ENCODE measurements at regions of chr7 and their contacts with region 1.

Region 1: GRCh38 chr7:18495412-18496340 is at the start of gene HDAC9:
- DNase-seq: no peak
- H3K4me3 Mint-ChIP-seq: peak within 1 kb of the TSS; percentile 75
- H3K27ac Mint-ChIP-seq: peak within 1 kb of the TSS; percentile 90
- H3K4me1 Mint-ChIP-seq: peaks cover 50% of the 10 kb centered on the region
- H3K27me3 Mint-ChIP-seq: no peaks in the 10 kb centered on the region
- CTCF ChIP-seq: no peak
- total RNA-seq, gene HDAC9: 152 and 159 TPM in 2 replicates

Region 2: DNA sequence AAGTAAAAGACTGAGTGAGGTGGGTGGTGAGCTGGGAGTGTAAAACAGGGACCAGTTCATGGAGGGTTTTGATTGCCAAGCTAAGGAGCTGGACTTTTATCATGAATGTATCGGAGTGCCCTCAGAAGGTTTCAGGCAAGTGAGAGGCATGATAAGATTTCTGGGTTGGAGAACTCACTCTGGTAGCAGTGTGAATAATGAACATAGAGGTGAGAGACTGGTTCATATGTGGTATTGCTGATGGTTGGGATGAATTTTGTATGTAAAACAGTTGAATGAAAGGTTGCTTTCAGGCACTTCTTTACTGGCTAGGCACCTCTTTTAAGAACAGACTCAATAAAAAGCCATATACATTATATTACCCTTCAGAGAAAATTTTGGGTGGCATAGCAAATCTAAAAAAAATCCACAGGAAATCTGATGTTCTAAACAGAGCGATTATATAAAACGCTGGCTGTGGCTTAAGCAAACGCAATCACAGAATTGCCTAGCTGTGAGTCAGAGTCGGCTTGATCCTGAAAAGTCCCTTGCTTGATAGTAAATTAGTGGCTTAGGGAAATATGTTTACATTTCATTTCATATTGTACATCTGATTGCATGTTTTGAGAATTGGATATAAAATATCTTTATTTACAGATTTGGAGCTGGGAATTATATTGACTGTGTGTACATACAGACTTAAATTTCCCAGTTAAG is 93.0 kb before region 1 on chr7:
- CTCF ChIA-PET with region 1: interaction called, 4 read pairs
- intact Hi-C with region 1: loop called (anchors 5 kb)
- DNase-seq: peak; percentile 24
- H3K4me3 Mint-ChIP-seq: no peak overlapping the region
- H3K27ac Mint-ChIP-seq: no peak overlapping the region
- H3K4me1 Mint-ChIP-seq: peaks cover 42% of the 10 kb centered on the region
- H3K27me3 Mint-ChIP-seq: no peaks in the 10 kb centered on the region
- CTCF ChIP-seq: no peak

Region 3: GRCh38 chr7:18458830-18459229 is 36.8 kb before region 1 on chr7:
- CTCF ChIA-PET with region 1: no interaction called
- intact Hi-C with region 1: loop called (anchors 2 kb)
- DNase-seq: peak; percentile 71
- H3K4me3 Mint-ChIP-seq: peak overlapping the region; percentile 51
- H3K27ac Mint-ChIP-seq: peak overlapping the region; percentile 80
- H3K4me1 Mint-ChIP-seq: peaks cover 31% of the 10 kb centered on the region
- H3K27me3 Mint-ChIP-seq: no peaks in the 10 kb centered on the region
- CTCF ChIP-seq: no peak

Region 4: GRCh38 chr7:18508443-18509427 is 13.1 kb after region 1 on chr7:
- CTCF ChIA-PET with region 1: interaction called, 27 read pairs
- intact Hi-C with region 1: no loop called
- DNase-seq: peak; percentile 83
- H3K4me3 Mint-ChIP-seq: peak overlapping the region; percentile 74
- H3K27ac Mint-ChIP-seq: peak overlapping the region; percentile 98
- H3K4me1 Mint-ChIP-seq: peaks cover 57% of the 10 kb centered on the region
- H3K27me3 Mint-ChIP-seq: no peaks in the 10 kb centered on the region
- CTCF ChIP-seq: no peak

Region 5: GRCh38 chr7:18535810-18536415 is 40.2 kb after region 1 on chr7:
- CTCF ChIA-PET with region 1: interaction called, 11 read pairs
- intact Hi-C with region 1: no loop called
- DNase-seq: peak; percentile 25
- H3K4me3 Mint-ChIP-seq: no peak overlapping the region
- H3K27ac Mint-ChIP-seq: peak overlapping the region; percentile 9
- H3K4me1 Mint-ChIP-seq: peaks cover 66% of the 10 kb centered on the region
- H3K27me3 Mint-ChIP-seq: no peaks in the 10 kb centered on the region
- CTCF ChIP-seq: no peak

Region 6: GRCh38 chr7:18570890-18571478 is 75.3 kb after region 1 on chr7:
- CTCF ChIA-PET with region 1: interaction called, 11 read pairs
- intact Hi-C with region 1: no loop called
- DNase-seq: peak; percentile 41
- H3K4me3 Mint-ChIP-seq: no peak overlapping the region
- H3K27ac Mint-ChIP-seq: peak overlapping the region; percentile 54
- H3K4me1 Mint-ChIP-seq: peaks cover 27% of the 10 kb centered on the region
- H3K27me3 Mint-ChIP-seq: no peaks in the 10 kb centered on the region
- CTCF ChIP-seq: peak; percentile 55